Gastrocnemius medialis (tissue), 4 donors: ENCODE measurements at regions of chr3 and their contacts with region 1.

Region 1: GRCh38 chr3:185976977-185977678 is 39.3 kb upstream of the TRA2B start:
- DNase-seq: peak; percentile 37 to 65
- ATAC-seq: peak; percentile 71 to 81
- H3K4me3 ChIP-seq: no peak overlapping the region
- H3K27ac ChIP-seq: no peak overlapping the region
- H3K4me1 ChIP-seq: peaks cover 0 to 7% of the 10 kb centered on the region in 2 donors
- H3K27me3 ChIP-seq: no peaks in the 10 kb centered on the region
- CTCF ChIP-seq: peak; percentile 53 to 86 (median 78)
- POLR2A ChIP-seq: no peak

Region 2: DNA sequence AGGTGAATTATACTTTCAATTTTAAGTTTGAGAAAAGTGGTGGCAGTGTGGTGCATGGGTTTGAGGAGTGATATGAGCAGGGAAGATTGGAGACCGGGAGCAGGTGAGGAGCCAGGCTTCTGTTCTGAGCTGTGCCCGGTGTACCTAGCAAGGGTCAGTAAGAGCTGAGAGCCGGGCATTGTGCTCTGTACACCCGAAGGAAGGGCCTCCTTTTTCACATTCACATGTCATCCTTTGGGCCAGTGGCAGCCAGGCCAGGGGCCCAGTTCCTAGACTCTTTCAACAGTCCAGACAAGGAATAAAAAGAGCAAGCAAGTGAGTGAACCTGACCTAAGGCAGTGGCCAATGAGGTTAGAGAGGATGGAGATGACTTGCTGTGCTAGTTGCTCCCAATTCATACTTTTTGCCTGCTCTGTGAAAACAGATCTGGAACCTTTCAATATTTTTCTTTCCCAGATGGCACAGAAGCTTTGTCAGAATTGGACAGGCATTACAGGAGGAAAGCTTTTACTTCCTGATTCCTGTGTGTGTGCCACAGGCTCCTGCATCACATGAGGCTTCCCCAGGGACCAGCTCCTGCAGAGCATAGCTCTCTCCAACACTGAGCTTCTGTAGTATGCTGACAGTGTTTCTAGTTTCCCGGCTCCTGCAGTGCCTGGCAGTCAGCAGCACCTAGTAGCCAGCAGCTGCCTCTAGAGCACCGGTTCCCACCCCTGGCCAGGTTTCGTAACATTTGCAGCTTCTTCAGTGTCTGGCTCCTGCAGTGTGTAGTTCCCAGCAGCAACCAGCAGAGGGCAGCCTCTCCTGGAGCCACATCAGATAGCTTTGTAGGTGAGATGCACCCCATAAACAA is 34.0 kb before region 1 on chr3:
- in situ Hi-C with region 1: no loop called
- intact Hi-C with region 1: loop called (anchors 1 kb)
- DNase-seq: peak; percentile 88 to 94
- ATAC-seq: peak; percentile 97 to 99
- H3K4me3 ChIP-seq: no peak overlapping the region
- H3K27ac ChIP-seq: peak overlapping the region; percentile 72 to 81 (median 78)
- H3K4me1 ChIP-seq: peaks cover 10 to 14% of the 10 kb centered on the region in 2 donors
- H3K27me3 ChIP-seq: no peaks in the 10 kb centered on the region
- CTCF ChIP-seq: peak; percentile 95 to 99 (median 97)
- POLR2A ChIP-seq: peak in 1 of 2 donors; percentile 14

Region 3: DNA sequence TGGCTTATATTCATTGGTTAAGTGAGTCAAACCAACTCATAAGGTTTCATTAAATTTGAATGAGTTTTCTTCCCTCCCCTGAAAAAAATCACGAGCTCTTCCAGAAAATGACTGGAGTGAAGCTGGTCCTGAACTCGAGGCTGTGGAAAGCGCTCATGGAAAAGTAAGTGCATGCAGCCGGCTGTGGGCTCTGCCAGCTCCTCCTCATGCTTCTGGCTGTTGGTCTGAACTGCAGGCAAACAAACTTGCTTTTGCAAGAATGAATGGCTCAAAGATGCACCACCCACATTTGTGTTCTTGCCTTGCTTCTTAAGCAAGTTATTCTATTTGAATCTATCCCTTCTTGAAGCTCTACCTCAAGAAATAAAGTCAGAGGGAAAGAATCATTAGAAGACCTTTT is 125.6 kb after region 1 on chr3:
- in situ Hi-C with region 1: no loop called
- intact Hi-C with region 1: loop called (anchors 5 kb)
- DNase-seq: no peak
- ATAC-seq: no peak
- H3K4me3 ChIP-seq: no peak overlapping the region
- H3K27ac ChIP-seq: peak overlapping the region; percentile 75 to 88 (median 84)
- H3K4me1 ChIP-seq: peaks cover 31 to 42% of the 10 kb centered on the region in 2 donors
- H3K27me3 ChIP-seq: no peaks in the 10 kb centered on the region
- CTCF ChIP-seq: no peak
- POLR2A ChIP-seq: no peak

Region 4: DNA sequence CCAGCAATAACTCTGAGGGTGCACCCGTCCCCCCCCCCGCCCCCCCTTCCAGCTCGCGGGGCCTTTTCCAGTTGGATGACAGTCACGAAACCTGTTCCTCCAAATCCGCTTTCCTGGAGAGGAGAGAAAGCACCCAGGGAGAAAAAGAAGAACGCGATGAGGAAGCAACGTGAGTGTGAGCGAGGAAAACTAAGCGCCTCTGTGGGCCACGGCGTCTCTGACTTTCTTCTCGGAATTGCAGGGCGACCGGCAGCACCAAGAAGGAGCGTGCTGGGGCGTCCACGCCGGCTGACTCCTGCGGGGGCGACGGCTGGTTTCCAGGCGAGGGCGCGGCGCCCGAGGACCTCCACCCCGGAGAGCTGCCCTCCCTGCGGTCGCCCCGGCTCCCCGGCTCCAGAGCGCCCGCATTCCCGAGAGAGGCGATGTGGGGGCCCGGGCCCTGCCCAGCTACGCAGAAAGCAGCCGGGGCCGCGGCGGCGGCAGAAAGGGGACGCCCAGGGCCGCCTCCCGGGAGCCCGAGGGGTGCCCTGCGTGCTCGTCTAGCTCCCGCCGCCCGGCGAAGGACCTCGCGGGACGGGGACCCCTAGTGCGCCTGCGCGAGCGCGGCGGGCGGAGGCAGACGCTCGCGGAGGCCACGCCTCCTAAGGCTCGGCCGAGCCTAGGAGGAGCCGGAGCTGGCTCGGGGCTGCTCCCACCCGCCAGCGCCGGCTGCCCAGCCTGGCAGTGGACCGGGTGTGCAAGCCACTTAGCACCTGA is 850.0 kb after region 1 on chr3:
- in situ Hi-C with region 1: no loop called
- intact Hi-C with region 1: loop called (anchors 5 kb)
- DNase-seq: peak; percentile 45 to 67
- ATAC-seq: peak; percentile 87 to 94
- H3K4me3 ChIP-seq: peak overlapping the region; percentile 65 to 90 (median 86)
- H3K27ac ChIP-seq: peak overlapping the region in 3 of 4 donors; percentile 30 to 75 (median 49)
- H3K4me1 ChIP-seq: peaks cover 0 to 14% of the 10 kb centered on the region in 2 donors
- H3K27me3 ChIP-seq: peaks cover 45 to 64% (median 62%) of the 10 kb centered on the region in 3 donors
- CTCF ChIP-seq: no peak
- POLR2A ChIP-seq: peak; percentile 59 to 61